Heart left ventricle (tissue), 16 donors: ENCODE measurements at regions of chr2 and their contacts with region 1.

Region 1: DNA sequence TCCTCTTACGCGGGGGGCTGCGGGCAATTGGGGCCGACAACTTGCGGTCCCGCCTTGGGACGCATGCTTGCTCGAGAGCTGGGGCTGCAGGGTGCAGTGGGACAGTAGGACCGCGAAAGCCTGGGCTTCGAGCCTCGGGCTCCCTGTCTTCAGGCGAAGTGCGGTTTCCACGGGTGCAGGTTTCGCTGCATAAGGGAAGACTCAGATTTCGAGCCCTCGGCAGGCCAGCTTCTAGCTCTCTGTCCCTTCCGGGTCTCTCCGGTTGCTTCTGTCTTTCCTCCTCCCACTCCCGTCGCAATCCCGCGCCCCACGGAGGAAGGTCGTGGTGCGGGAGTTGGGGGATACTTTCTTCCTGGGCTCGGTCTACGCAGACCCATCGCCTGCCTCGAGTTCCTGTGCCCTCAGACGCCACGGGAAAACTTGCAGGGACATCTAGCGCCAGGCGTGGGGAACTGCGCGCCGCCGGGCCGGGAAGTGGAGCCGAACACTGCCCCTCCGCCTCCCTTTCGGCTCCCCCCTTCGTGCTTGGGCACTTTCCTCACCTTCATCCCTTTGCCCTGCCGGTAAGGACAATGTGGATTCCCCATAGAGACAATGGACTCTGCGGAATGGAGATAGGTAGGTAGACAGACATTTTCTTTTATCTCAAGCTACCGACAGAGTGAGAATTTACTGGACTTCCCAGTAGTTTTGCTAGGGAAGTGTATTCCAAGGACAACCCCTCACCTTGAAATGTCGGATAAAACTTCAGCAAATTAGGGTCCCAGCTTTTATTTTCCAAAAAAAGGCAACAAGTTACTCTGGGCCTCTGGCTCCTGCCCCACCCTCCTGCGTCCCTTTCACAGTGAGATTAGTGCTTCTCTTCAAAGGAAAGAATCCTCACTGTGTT is 4.2 kb upstream of the HOXD13 start:
- DNase-seq: peak in 3 of 5 donors; percentile 43 to 77 (median 52)
- ATAC-seq: peak; percentile 41 to 87 (median 84)
- H3K4me3 ChIP-seq: peak overlapping the region in 11 of 12 donors; percentile 7 to 43 (median 25)
- H3K27ac ChIP-seq: peak overlapping the region in 1 of 12 donors; percentile 86
- H3K4me1 ChIP-seq: peaks cover 0 to 51% (median 12%) of the 10 kb centered on the region in 12 donors
- H3K27me3 ChIP-seq: peaks cover 88 to 100% (median 98%) of the 10 kb centered on the region in 9 donors
- CTCF ChIP-seq: peak; percentile 54 to 80 (median 75)
- POLR2A ChIP-seq: no peak

Region 2: DNA sequence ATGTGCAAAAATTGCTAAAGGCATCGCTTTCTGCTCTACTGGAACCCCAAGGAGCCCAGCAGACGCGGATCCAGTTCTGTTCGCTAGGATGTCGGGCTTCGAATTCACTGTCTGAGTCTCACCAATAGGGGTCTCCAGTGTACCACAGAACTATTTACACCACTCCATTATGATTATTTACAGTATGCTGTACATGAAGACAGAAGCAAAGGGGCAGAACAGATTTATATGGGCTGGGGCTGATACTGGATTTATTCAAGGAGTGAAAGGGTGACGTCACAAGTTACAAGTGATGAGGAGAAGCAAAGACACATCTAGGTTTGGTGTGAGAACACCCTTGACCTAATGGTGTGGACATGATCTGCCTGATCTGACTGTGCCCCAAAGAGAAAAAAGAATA is 721.5 kb before region 1 on chr2:
- intact Hi-C with region 1: loop called (anchors 2 to 5 kb)
- DNase-seq: peak in 2 of 5 donors; percentile 13 to 20
- ATAC-seq: peak in 3 of 4 donors; percentile 37 to 76 (median 69)
- H3K4me3 ChIP-seq: no peak overlapping the region
- H3K27ac ChIP-seq: no peak overlapping the region
- H3K4me1 ChIP-seq: peaks cover 0 to 11% (median 0%) of the 10 kb centered on the region in 12 donors
- H3K27me3 ChIP-seq: peaks cover 0 to 71% (median 11%) of the 10 kb centered on the region in 9 donors
- CTCF ChIP-seq: peak; percentile 54 to 76 (median 70)
- POLR2A ChIP-seq: no peak

Region 3: DNA sequence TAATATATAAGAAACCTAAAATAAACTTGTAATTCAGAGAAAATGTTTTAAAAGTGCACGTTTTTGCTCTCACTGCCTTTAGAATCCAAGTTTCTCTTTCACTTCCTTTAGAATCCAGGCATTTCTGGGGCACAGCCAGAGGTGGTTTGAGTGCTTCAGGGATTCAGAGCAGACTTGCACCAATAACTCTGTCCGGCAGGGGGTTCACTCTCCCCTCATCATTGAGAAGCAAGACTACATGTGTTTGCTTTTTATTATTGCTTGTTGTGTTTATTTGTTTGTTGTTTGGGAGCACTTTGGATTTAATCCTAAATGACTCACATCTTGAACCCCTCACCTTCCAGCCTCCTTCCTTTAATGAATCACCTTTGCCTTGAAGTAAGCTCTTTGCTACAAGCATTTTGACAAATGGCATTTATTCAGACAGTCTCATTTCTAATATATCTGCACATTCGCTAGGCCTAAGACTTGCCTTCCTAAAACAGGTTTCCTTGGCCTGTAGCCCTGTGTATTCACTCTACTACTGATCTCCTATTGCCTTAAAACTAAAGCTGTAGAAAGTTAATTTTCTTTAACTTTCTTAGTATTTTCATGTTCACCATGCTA is 673.3 kb before region 1 on chr2:
- intact Hi-C with region 1: loop called in 4 of 10 experiments (anchors 5 to 10 kb)
- DNase-seq: peak; percentile 47 to 70 (median 59)
- ATAC-seq: peak in 2 of 4 donors; percentile 48 to 58
- H3K4me3 ChIP-seq: no peak overlapping the region
- H3K27ac ChIP-seq: no peak overlapping the region
- H3K4me1 ChIP-seq: peaks cover 0 to 6% (median 0%) of the 10 kb centered on the region in 12 donors
- H3K27me3 ChIP-seq: peaks cover 0 to 4% (median 0%) of the 10 kb centered on the region in 9 donors
- CTCF ChIP-seq: peak; percentile 45 to 67 (median 54)
- POLR2A ChIP-seq: no peak

Region 4: GRCh38 chr2:176024083-176024482 is 64.2 kb before region 1 on chr2:
- intact Hi-C with region 1: no loop called
- DNase-seq: no peak
- ATAC-seq: no peak
- H3K4me3 ChIP-seq: no peak overlapping the region
- H3K27ac ChIP-seq: no peak overlapping the region
- H3K4me1 ChIP-seq: no peaks in the 10 kb centered on the region
- H3K27me3 ChIP-seq: peaks cover 0 to 22% (median 0%) of the 10 kb centered on the region in 9 donors
- CTCF ChIP-seq: no peak
- POLR2A ChIP-seq: no peak